ENCODE measurements at regions of chr19 and their contacts with region 1.

Region 1: GRCh38 chr19:16795721-16796120 is 33.5 kb upstream of the SIN3B start:
- DNase-seq: no peak
- H3K4me3 ChIP-seq: no peak overlapping the region
- H3K27ac ChIP-seq: no peak overlapping the region
- H3K4me1 ChIP-seq: no peaks in the 10 kb centered on the region
- H3K27me3 ChIP-seq: no peaks in the 10 kb centered on the region
- CTCF ChIP-seq: no peak
- EP300 ChIP-seq: no peak
- POLR2A ChIP-seq: no peak

Region 2: DNA sequence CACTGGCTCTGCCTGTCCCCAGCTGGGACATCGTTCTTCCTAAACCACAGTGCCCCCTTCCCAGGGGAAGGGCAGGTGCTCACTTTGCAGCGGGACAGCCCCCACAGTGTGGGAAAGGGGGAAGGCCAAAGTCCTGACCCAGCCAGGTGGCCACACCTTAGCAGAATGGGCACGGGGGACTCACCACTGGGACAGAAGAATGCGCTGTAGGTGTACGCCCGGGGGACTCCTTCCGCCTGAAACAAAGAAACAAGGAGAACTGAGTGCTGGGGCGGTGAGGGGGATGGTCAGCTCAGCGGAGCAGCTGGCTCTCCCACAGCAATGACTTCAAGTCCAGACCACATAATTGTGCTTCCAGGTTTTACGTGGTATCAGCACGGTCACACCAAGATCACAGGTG is 142.5 kb after region 1 on chr19:
- intact Hi-C with region 1: loop called (anchors 10 kb)
- DNase-seq: no peak
- H3K4me3 ChIP-seq: no peak overlapping the region
- H3K27ac ChIP-seq: no peak overlapping the region
- H3K4me1 ChIP-seq: no peaks in the 10 kb centered on the region
- H3K27me3 ChIP-seq: no peaks in the 10 kb centered on the region
- CTCF ChIP-seq: no peak
- EP300 ChIP-seq: no peak
- POLR2A ChIP-seq: no peak